ENCODE measurements at regions of chr3 and their contacts with region 1.

Region 1: GRCh38 chr3:25594007-25594502 is 70.7 kb downstream of the TOP2B start:
- DNase-seq: no peak

Region 2: DNA sequence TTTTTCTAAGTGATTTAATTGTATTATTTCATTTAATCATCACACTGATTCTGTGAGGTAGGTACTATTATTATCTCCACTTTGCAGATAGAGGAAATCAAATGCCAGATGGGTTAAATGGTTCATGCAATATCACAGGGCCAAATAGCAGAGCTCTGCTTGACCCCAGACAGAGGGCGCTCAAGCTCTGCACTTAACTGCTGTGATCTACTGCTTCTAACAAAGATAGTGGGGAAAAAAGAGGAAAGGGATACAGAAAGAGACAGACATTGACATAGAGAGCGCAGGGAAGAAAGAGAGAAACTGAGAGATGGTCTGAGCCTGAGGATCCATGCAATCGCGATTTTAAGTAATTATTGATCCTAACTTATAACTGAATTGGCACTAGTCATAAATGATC is 820.3 kb before region 1 on chr3:
- intact Hi-C with region 1: loop called (anchors 2 kb)
- DNase-seq: peak; percentile 11 to 93 (median 64)

Region 3: DNA sequence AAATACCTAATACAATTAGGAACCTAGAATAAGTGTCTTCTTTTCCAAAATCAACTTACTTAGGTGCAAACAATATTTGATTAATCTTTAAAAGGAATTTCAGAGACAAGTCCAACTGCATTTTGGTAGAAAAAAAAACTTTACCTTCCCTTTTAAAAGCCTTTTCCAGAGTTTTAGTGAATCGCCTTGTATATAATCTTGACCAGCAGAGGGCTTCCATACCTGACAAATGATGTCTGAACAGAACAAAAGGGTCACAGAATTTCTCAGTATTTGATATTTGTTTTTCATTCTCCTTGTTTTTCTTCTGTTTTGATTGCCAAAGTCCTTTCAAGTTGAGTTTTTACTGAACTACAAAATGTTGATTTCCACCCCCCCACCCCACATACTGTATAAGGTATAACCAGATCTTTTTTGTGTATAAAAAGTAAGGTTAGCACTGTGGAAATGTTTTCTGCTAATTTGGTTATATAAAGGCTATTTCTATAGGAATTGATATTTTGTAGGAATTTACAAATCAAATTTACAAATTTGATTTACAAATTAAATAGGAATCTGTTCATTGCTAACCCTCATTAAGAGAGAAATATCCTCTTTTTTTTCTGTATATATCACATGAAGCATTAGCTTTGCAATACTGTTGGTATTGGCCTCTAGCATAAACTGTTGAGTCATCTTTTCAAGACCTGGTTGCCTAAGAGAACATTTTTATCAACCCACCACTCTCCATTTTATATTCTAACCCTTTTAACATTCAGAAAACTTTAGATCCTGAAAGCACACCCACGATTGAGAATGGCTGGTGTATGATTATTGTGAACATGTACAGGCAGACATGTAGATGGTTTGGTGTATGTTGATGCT is 630.1 kb before region 1 on chr3:
- intact Hi-C with region 1: loop called (anchors 5 kb)
- DNase-seq: no peak

Region 4: DNA sequence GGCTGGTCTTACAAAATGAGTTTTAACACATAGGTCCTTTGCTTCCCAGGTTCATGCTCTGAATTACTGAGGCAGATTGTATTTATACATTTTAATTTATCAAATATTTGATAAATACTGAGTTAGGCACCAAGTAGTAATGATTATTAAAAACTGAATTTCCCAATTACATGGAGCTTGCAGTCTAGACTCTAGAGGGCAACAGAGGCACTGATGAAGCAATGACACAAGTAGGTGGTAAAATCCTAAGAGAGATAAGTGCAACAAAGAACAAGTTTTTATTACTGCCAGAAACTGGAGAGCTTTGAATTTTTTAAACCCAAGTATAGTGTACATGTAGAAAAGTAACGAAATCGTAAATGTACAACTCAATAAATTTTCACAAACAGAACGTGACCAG is 572.2 kb before region 1 on chr3:
- intact Hi-C with region 1: loop called (anchors 10 kb)
- DNase-seq: no peak

Region 5: DNA sequence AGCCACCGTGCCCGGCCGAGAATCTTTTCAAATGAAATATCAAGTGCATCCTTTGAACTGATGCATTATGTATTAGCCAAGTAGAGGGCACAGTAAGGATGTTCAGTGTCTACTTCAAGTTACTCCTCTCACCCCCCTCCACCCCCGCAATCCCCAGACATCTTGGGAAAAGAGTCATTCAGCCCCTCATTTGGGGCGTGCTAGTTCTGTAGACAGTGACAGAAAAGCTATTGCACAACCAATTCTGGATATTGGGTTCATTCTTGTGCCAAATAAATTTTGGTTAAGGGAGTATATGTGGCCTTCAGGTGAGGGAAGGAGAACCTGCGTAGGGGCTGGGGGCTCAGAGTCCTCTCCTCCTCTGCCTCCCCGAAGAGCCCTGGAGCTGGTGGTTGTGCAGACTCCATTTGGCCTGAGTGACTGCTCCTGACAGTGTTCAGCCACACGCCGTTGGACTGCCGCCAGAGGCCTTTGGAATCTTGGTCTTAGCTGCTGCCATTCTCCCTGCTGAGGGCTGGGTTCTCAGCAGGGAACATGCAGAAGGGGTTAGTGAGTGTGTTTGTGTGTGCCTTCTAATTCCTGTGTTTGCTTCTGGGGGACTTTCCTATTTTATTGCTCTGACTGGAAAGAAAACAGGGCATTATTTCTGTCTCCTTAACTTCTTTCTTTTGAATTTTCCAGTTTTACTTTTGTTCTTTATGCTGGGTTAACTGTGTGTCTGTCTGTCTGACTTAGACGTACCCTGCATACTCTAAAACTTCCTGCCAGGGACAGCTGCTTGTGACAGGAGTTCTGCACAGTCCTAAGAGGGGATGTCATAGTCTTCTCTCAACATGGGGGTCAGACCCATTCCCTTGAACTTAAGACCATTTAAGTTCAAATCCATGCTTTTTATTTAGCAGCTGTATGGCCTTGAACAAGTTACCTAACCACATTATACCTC is 145.0 kb before region 1 on chr3:
- intact Hi-C with region 1: no loop called
- DNase-seq: peak in 9 of 10 donors; percentile 44 to 93 (median 58)